Activated naive CD8-positive, alpha-beta T cell treated with anti-CD3 and anti-CD28 coated beads, Interleukin-2, amount 10 ng/mL, durations not matched to agents 7 days and 5 days (primary cell): ENCODE measurements at regions of chr2 and their contacts with region 1.

Region 1: GRCh38 chr2:239298116-239298804 is 102.6 kb downstream of the HDAC4 start:
- DNase-seq: peak; percentile 75
- ATAC-seq: peak; percentile 93
- H3K4me3 Mint-ChIP-seq: peak overlapping the region; percentile 88
- H3K27ac Mint-ChIP-seq: peak overlapping the region; percentile 95
- H3K4me1 Mint-ChIP-seq: peaks cover 51% of the 10 kb centered on the region
- H3K27me3 Mint-ChIP-seq: no peaks in the 10 kb centered on the region

Region 2: DNA sequence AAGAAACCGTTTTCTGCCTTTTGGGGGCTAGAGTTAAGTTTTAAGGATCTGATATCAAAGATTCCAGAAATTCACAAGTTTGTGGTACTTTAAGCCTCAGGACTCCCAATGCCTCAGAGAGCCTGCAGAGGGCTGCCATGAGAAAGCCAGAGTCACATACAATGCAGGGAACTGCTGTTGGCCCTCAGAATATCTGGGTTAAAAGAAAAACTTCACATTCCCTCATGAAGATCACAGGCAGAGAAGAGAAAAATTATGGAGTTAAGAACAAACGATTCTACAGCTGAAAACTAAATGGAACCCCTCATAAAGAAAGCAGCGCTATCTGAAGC is 63.0 kb after region 1 on chr2:
- POLR2A ChIA-PET with region 1: no interaction called
- DNase-seq: no peak
- ATAC-seq: no peak
- H3K4me3 Mint-ChIP-seq: no peak overlapping the region
- H3K27ac Mint-ChIP-seq: no peak overlapping the region
- H3K4me1 Mint-ChIP-seq: peaks cover 12% of the 10 kb centered on the region
- H3K27me3 Mint-ChIP-seq: no peaks in the 10 kb centered on the region

Region 3: GRCh38 chr2:239401067-239401880 is 103.0 kb after region 1 on chr2:
- POLR2A ChIA-PET with region 1: interaction called, 13 read pairs
- DNase-seq: peak; percentile 99
- ATAC-seq: peak; percentile 93
- H3K4me3 Mint-ChIP-seq: peak overlapping the region; percentile 90
- H3K27ac Mint-ChIP-seq: peak overlapping the region; percentile 94
- H3K4me1 Mint-ChIP-seq: peaks cover 29% of the 10 kb centered on the region
- H3K27me3 Mint-ChIP-seq: peaks cover 6% of the 10 kb centered on the region